B cell (primary cell): ENCODE measurements at regions of chr9 and their contacts with region 1.

Region 1: GRCh38 chr9:72038890-72039410 is 21.5 kb downstream of the C9orf57 start:
- DNase-seq: peak; percentile 72
- ATAC-seq: peak; percentile 84
- H3K4me3 ChIP-seq: no peak overlapping the region
- H3K4me3 Mint-ChIP-seq: peak overlapping the region; percentile 9
- H3K27ac ChIP-seq: no peak overlapping the region
- H3K27ac Mint-ChIP-seq: no peak overlapping the region
- H3K4me1 ChIP-seq: peaks cover 4 to 5% of the 10 kb centered on the region in 2 donors
- H3K4me1 Mint-ChIP-seq: peaks cover 5% of the 10 kb centered on the region
- H3K27me3 ChIP-seq: no peaks in the 10 kb centered on the region
- H3K27me3 Mint-ChIP-seq: peaks cover 20% of the 10 kb centered on the region
- CTCF ChIP-seq: peak; percentile 97

Region 2: DNA sequence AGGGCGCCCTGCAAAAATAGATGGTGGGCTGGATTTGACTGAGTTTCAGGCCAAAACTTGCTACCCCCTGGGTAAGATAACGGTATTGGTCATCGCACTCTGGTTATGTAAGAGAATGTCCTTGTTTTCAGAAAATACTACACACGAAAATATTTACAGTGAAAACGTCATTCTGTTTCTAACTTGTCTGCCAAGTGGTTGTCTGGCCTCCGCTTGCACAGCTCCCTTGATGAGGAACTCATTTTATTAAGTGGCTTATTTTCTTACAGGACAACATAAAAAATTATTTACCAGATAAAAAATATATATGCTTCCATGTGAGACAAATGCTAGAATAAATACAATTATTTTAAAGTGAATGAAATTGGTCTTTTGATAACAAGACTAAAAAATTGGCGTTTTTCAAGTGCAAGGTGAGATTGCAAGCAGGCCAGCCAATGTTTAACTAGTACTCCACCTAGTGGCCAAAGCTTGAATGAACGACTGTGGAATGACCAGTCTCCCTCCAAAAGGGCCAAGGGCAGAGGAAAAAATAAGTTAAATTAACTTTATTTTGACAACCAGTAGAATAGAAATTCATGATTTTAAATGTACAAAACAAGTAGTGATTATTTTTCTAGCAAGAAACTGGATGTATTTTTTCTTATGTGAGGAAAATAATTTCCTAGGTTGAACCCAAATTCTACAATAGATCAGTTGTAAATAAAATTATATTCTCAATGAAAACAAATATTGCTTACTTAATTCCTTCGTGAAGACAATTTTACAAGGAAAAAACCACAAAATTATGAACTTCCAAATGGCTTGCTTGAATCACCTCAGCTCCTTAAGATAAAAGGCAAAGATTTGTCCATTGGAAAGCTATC is 232.9 kb after region 1 on chr9:
- CTCF ChIA-PET with region 1: interaction called, 74 read pairs
- POLR2A ChIA-PET with region 1: no interaction called
- intact Hi-C with region 1: no loop called
- DNase-seq: peak; percentile 63
- ATAC-seq: peak; percentile 56
- H3K4me3 ChIP-seq: no peak overlapping the region
- H3K4me3 Mint-ChIP-seq: no peak overlapping the region
- H3K27ac ChIP-seq: no peak overlapping the region
- H3K27ac Mint-ChIP-seq: no peak overlapping the region
- H3K4me1 ChIP-seq: no peaks in the 10 kb centered on the region
- H3K4me1 Mint-ChIP-seq: no peaks in the 10 kb centered on the region
- H3K27me3 ChIP-seq: no peaks in the 10 kb centered on the region
- H3K27me3 Mint-ChIP-seq: peaks cover 20% of the 10 kb centered on the region
- CTCF ChIP-seq: peak; percentile 99

Region 3: GRCh38 chr9:72292874-72293607 is 254.1 kb after region 1 on chr9:
- CTCF ChIA-PET with region 1: no interaction called
- POLR2A ChIA-PET with region 1: no interaction called
- intact Hi-C with region 1: no loop called
- DNase-seq: no peak
- ATAC-seq: no peak
- H3K4me3 ChIP-seq: no peak overlapping the region
- H3K4me3 Mint-ChIP-seq: no peak overlapping the region
- H3K27ac ChIP-seq: no peak overlapping the region
- H3K27ac Mint-ChIP-seq: no peak overlapping the region
- H3K4me1 ChIP-seq: peaks cover 7 to 19% of the 10 kb centered on the region in 2 donors
- H3K4me1 Mint-ChIP-seq: peaks cover 16% of the 10 kb centered on the region
- H3K27me3 ChIP-seq: peaks cover 0 to 5% (median 0%) of the 10 kb centered on the region in 4 experiments
- H3K27me3 Mint-ChIP-seq: peaks cover 8% of the 10 kb centered on the region
- CTCF ChIP-seq: no peak

Region 4: DNA sequence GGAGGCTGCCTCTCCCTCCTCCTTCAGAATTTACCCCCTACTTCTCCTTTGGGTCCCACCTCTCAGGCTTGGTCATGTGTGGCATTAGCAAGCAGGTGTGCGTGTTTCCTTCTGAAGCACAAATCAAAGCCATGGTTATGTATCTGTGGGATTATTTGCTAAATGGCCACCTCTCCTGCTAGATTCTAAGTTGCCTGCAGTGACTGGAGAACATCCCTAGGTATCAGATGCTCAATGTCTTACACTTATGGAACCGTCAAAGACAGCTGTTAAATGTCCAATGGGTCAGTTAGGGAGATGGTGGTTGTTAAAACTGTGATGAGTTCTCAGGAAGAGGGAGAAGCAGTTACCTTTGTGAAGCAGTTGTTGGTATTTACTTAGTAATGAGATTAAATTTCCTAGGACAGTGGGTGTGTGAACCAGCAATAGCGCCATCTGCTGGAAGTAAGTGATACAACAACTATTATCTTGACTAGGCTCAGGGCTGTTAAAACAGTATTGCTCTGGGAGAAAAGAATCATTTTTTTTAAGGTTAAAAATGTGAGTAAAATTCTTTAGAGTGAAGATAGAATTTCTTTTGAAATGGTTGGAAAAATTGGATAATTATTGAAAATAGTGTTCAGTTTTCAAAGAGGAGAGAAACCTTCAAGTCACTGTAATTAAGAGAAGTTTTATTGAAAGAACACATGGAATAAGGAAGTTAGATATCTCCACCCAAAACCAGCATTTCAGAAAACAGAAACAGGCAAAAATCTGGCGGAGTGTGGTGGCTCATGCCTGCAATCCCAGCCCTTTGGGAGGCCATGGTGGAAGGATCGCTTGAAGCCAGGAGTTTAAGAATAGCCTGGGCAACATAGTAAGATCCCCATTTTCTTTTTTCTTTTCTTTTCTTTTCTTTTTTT is 553.8 kb after region 1 on chr9:
- CTCF ChIA-PET with region 1: interaction called, 4 read pairs
- POLR2A ChIA-PET with region 1: no interaction called
- intact Hi-C with region 1: loop called (anchors 1 kb)
- DNase-seq: peak; percentile 73
- ATAC-seq: peak; percentile 67
- H3K4me3 ChIP-seq: no peak overlapping the region
- H3K4me3 Mint-ChIP-seq: no peak overlapping the region
- H3K27ac ChIP-seq: no peak overlapping the region
- H3K27ac Mint-ChIP-seq: no peak overlapping the region
- H3K4me1 ChIP-seq: peaks cover 0 to 3% of the 10 kb centered on the region in 2 donors
- H3K4me1 Mint-ChIP-seq: peaks cover 5% of the 10 kb centered on the region
- H3K27me3 ChIP-seq: peaks cover 0 to 5% (median 0%) of the 10 kb centered on the region in 4 experiments
- H3K27me3 Mint-ChIP-seq: peaks cover 5% of the 10 kb centered on the region
- CTCF ChIP-seq: peak; percentile 92

Region 5: DNA sequence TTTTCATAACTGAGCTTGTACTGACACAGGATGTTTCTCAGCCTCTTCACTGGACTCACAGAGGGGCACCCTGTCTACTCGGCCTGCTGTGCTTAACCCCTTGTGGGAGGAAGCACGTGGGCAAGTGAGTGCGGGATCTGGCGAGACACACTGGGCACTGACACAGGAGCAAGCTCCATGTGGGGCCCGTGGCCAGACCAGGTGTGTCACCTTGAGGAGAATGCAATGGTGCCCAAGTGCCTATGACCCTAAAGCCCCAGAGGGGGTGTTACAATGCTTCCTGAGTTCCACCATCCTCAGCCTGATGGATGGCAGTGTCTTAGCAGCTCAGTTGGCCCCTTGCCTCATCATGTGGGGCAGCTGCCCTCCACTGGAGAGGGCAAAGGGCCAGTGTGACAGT is 785.0 kb after region 1 on chr9:
- CTCF ChIA-PET with region 1: interaction called, 4 read pairs
- POLR2A ChIA-PET with region 1: no interaction called
- intact Hi-C with region 1: loop called (anchors 2 kb)
- DNase-seq: no peak
- ATAC-seq: no peak
- H3K4me3 ChIP-seq: no peak overlapping the region
- H3K4me3 Mint-ChIP-seq: no peak overlapping the region
- H3K27ac ChIP-seq: no peak overlapping the region
- H3K27ac Mint-ChIP-seq: no peak overlapping the region
- H3K4me1 ChIP-seq: no peaks in the 10 kb centered on the region
- H3K4me1 Mint-ChIP-seq: no peaks in the 10 kb centered on the region
- H3K27me3 ChIP-seq: no peaks in the 10 kb centered on the region
- H3K27me3 Mint-ChIP-seq: no peaks in the 10 kb centered on the region
- CTCF ChIP-seq: no peak